Ascending aorta (tissue), 2 donors: ENCODE measurements at regions of chr3 and their contacts with region 1.

Region 1: DNA sequence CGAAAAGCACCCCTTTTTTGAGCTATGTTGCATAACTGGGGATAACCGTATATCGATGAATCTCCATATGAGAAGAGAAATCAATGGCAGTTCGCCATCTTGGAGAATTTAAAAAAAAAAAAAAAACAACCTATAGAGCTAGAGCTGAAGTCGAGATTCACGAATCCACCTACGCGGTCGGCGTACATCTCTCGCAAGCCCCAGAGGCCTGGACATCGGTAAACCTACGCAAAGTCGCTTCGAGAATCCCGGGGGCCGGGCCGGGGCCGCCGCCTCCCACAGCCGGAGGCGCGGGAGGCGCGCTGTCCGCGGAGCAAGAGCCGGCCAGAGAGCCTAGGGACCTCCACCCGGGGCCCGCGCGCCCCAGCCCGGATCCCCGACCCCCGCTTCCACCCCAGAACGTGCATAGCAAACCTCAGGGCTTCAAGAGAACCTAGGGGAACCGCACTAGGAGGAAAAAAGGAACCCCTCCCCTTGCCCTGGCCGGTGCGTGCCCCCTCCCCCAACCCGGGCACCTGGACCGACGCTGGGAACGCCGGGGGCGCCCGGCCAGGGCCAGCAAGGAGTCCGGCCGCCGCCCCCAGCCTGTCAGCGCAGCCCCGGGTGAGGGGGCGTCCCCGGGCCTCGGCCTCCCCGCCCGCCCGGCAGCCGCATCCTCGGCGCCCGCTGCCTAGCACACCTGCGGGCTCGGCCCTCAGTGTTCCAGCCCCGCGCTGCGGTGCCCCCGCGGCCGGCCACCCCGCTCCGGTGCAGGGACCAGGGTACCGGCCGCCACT is 567 bp downstream of the PFN2 start:
- DNase-seq: peak in 1 of 2 donors; percentile 87
- H3K4me3 ChIP-seq: peak overlapping the region; percentile 90 to 98
- H3K27ac ChIP-seq: peak overlapping the region; percentile 91 to 99
- H3K4me1 ChIP-seq: peaks cover 6 to 18% of the 10 kb centered on the region in 2 donors
- H3K27me3 ChIP-seq: no peaks in the 10 kb centered on the region
- CTCF ChIP-seq: no peak

Region 2: DNA sequence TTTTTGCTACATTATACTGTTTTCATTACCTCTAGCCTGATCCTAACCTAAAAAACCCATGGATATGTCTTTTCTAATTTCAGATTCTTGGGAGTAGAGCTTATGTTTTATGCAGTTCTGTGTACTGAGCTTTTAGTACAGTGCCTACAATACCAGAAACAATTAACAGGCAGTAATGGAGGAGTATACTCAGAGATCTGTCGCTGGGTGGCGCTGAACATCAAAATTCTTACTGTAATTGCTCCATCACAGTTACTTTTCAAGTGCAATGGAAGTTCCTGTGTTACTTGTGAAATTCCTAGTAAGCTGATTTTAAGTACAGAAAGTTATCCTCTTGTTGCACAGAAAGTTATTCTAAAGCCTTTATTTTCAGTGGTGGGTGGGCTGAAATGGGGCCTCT is 90.3 kb before region 1 on chr3:
- intact Hi-C with region 1: loop called (anchors 5 kb)
- DNase-seq: peak in 1 of 2 donors; percentile 80
- H3K4me3 ChIP-seq: no peak overlapping the region
- H3K27ac ChIP-seq: no peak overlapping the region
- H3K4me1 ChIP-seq: peaks cover 0 to 3% of the 10 kb centered on the region in 2 donors
- H3K27me3 ChIP-seq: no peaks in the 10 kb centered on the region
- CTCF ChIP-seq: peak; percentile 46 to 72 (median 56)

Region 3: GRCh38 chr3:150005243-150006112 is 35.4 kb after region 1 on chr3:
- intact Hi-C with region 1: no loop called
- DNase-seq: no peak
- H3K4me3 ChIP-seq: no peak overlapping the region
- H3K27ac ChIP-seq: no peak overlapping the region
- H3K4me1 ChIP-seq: no peaks in the 10 kb centered on the region
- H3K27me3 ChIP-seq: no peaks in the 10 kb centered on the region
- CTCF ChIP-seq: no peak

Region 4: GRCh38 chr3:150183678-150184425 is 213.7 kb after region 1 on chr3:
- intact Hi-C with region 1: loop called (anchors 1 kb)
- DNase-seq: peak in 1 of 2 donors; percentile 80
- H3K4me3 ChIP-seq: peak overlapping the region; percentile 48 to 60
- H3K27ac ChIP-seq: peak overlapping the region; percentile 57 to 69
- H3K4me1 ChIP-seq: peaks cover 0 to 2% of the 10 kb centered on the region in 2 donors
- H3K27me3 ChIP-seq: no peaks in the 10 kb centered on the region
- CTCF ChIP-seq: peak; percentile 46 to 79 (median 61)

Region 5: GRCh38 chr3:150495563-150496168 is 525.5 kb after region 1 on chr3:
- intact Hi-C with region 1: loop called (anchors 2 kb)
- DNase-seq: no peak
- H3K4me3 ChIP-seq: no peak overlapping the region
- H3K27ac ChIP-seq: no peak overlapping the region
- H3K4me1 ChIP-seq: no peaks in the 10 kb centered on the region
- H3K27me3 ChIP-seq: no peaks in the 10 kb centered on the region
- CTCF ChIP-seq: peak; percentile 67 to 78 (median 71)